Left cardiac atrium (tissue), 4 donors: ENCODE measurements at regions of chr9 and their contacts with region 1.

Region 1: GRCh38 chr9:114662081-114662989 is 4.7 kb upstream of the TEX53 start:
- DNase-seq: peak; percentile 37
- ATAC-seq: peak; percentile 72 to 80

Region 2: DNA sequence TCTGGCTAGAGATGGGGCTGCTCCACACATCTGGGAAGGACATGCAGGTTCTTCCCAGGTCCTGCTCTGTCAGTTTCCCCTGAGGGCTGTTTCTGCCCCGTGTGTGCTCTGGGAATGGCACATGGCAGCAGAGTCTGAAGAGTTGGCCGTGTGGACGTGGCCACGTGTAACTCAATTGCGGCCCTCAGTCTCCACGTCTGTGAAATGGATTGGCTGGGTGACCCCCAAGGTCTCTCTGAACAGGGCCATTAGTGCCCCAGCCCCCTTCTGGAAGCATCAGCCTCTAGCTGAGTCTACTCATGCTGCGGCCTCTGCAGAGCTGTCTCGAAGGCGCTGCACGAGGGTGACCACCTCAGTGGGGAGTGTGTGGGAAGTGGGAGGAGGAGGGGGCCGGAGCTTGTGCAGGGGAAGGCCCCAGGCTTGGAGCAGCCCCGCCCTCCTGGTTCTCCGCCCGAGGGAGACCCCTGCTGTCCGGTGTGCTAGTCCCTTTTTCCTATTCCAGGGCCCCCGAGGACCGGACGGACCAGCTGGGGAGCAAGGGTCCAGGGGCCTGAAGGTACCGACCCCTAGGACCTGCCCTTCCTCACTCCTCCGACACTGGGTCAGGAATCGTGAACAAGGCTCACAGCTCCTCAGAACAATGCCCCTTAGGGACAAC is 398.4 kb before region 1 on chr9:
- intact Hi-C with region 1: no loop called
- DNase-seq: no peak
- ATAC-seq: peak; percentile 7 to 60

Region 3: DNA sequence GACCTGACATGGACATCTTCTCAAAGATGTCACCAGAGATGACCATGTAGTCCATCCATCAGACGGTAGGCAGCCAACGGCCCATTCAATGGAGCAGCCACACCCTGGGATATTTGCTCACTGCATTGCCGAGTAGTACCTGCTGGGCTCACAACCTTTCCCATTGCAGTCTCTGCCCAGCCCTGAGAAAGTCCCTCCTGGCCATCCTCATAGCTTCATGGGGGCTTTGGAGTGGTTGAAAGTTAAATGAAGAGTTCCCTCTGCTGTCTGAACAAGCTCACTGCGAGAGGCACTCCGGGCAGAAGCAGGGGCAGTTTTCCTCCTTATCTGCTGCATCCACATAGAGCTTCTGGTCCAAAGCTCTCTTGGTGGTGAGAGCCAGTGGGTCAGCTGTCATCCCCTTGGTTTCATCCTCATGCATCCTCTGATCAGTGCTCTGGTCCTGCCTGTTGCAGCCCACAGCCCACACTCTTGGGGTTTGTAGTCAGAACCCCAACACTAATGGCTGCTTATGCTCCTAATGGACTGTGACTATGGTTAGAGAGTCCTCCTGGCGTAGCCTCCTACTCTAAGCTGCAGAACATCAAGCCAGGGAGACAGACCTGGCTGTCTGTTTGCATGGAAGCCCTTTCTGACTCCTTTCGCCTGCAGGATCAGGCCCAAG is 244.7 kb after region 1 on chr9:
- intact Hi-C with region 1: loop called in 1 of 2 experiments (anchors 5 kb)
- DNase-seq: no peak
- ATAC-seq: peak; percentile 29 to 36

Region 4: GRCh38 chr9:115022760-115023434 is 360.6 kb after region 1 on chr9:
- intact Hi-C with region 1: loop called in 1 of 2 experiments (anchors 5 kb)
- DNase-seq: no peak
- ATAC-seq: no peak

Region 5: DNA sequence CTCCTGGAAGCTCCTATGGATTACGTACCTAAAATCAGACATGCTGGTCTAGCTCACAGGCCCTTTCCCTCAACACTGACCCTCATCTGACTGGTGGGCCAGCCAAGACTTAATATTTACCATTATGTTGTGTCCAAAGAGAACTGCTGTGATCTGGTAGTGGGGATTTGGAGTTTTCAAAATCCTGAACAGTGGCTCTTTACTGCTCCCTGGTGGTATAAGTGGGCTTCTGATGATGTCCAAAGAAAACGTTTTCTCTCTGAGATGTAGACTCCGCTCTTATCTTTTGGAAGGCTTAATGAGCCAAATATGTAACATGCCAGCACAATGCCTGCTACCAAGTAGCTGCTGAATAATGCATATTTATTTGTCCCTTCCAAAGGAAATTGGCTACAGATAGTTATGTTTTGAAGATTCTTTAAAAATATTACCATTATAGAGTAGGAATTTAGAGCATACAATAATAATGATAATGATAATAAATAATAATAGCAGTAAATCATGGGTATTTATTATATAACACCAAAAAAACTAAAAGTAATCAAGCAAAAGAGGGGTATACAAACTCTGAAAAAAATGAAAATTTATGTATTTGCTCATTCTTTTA is 862.2 kb after region 1 on chr9:
- intact Hi-C with region 1: loop called in 1 of 2 experiments (anchors 10 kb)
- DNase-seq: peak; percentile 19
- ATAC-seq: peak; percentile 68 to 74